ENCODE measurements at regions of chr3 and their contacts with region 1.

Region 1: GRCh38 chr3:48739955-48740823 is 23.2 kb upstream of the IP6K2 start:
- DNase-seq: peak; percentile 88 to 97 (median 95)
- ATAC-seq: peak; percentile 76 to 92 (median 91)
- H3K4me3 ChIP-seq: peak overlapping the region in 7 of 12 donors; percentile 7 to 31 (median 23)
- H3K27ac ChIP-seq: peak overlapping the region; percentile 77 to 94 (median 85)
- H3K4me1 ChIP-seq: peaks cover 9 to 60% (median 47%) of the 10 kb centered on the region in 12 donors
- H3K27me3 ChIP-seq: no peaks in the 10 kb centered on the region
- CTCF ChIP-seq: peak; percentile 69 to 95 (median 90)
- POLR2A ChIP-seq: no peak

Region 2: GRCh38 chr3:48716982-48717746 is 23.0 kb before region 1 on chr3 and contains the start of gene IP6K2:
- intact Hi-C with region 1: loop called in 1 of 10 experiments (anchors 2 kb)
- DNase-seq: peak; percentile 99 to 100 (median 99)
- ATAC-seq: peak; percentile 99 to 100 (median 100)
- H3K4me3 ChIP-seq: peak within 1 kb of the TSS; percentile 65 to 98 (median 79)
- H3K27ac ChIP-seq: peak within 1 kb of the TSS; percentile 75 to 92 (median 87)
- H3K4me1 ChIP-seq: peaks cover 0 to 43% (median 35%) of the 10 kb centered on the region in 12 donors
- H3K27me3 ChIP-seq: no peaks in the 10 kb centered on the region
- CTCF ChIP-seq: peak in 1 of 12 donors; percentile 23
- POLR2A ChIP-seq: peak in 1 of 2 donors; percentile 90
- total RNA-seq, gene IP6K2: 14.1 to 35.5 (median 25.6) TPM

Region 3: DNA sequence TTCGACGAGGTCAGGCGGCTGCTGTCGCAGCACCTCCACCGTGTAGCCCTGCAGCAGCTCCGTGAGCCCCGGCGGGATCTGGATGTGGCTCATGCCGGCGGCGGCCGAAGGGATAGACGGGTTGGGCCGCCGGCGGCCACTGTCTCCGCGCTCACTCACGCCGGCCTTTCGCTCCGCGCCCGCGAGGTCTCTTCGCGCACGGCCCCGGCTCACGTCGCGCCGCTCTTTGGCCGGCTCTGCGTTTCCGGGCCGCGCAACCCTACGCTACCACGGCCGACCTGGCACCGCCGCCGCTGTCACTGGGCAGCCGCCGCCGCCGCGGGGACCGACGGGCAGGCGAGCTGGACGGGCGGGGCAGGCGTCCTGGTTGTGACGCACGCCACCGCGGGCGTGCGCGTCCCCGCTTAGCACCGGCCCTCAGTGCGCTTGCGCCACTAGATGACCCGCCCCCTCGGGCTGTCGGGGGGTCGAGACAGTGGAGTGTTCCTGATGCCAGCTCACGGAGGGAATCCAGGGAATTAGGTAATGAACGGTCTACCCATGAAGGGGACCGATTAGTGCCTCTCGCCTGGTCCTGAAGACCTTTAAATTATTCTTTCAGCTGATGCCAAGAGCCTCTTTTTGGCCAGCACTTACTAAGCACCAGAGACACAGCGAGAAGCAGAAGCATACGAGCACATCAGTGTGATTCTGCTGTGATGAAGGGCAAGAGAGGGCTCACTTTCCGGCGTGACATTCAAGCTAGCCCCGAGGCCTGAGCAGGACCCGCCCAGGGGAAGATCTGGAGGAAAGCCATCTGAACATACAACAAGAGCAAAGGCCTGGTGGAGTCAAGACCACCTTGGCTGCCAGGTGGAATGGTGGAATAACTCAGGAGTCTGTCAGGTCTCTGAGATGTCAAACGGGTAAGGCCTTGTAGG is 107.6 kb after region 1 on chr3 and contains the start of gene PRKAR2A:
- intact Hi-C with region 1: loop called in 1 of 10 experiments (anchors 5 kb)
- DNase-seq: peak; percentile 90 to 95 (median 93)
- ATAC-seq: peak; percentile 88 to 97 (median 96)
- H3K4me3 ChIP-seq: peak within 1 kb of the TSS; percentile 65 to 94 (median 84)
- H3K27ac ChIP-seq: peak within 1 kb of the TSS; percentile 91 to 99 (median 95)
- H3K4me1 ChIP-seq: peaks cover 10 to 30% (median 20%) of the 10 kb centered on the region in 12 donors
- H3K27me3 ChIP-seq: no peaks in the 10 kb centered on the region
- CTCF ChIP-seq: no peak
- POLR2A ChIP-seq: peak; percentile 20 to 90
- total RNA-seq, gene PRKAR2A: 33.2 to 71.6 (median 44.9) TPM